BJ (cell line): ENCODE measurements at regions of chr19 and their contacts with region 1.

Region 1: DNA sequence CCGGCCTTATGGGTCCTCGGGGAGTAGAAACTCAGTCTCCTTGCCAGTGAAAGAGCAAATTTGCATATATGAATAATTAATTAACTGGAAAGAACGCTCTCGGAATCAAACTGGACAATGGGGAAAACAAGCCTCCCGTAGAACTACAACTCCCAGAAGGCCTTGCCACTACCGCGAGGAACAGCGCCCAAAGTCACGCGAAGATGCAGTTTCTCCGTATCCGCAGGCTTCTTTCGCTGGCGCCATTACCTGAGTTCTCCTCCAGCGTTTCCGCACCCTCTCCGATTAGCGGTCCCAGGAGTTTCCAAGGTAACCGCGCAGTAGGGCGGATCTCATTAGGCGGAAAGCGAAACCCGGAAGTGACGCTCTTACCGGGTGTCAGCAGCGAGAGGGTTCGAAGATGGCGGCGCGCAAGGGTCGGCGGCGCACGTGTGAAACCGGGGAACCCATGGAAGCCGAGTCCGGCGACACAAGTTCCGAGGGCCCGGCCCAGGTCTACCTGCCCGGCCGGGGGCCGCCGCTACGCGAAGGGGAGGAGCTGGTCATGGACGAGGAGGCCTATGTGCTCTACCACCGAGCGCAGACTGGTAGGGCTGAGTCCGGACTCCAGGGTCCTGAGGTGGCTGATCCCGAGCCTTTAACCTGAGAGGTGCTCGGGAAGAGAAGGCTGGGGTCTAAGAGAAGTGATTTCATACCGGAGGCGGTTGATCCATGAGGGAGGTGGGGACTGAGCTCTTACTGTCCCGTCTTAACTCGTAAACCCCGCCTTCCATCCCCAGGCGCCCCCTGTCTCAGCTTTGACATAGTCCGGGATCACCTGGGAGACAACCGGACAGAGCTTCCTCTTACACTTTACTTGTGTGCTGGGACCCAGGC is at the start of gene GRWD1:
- DNase-seq: peak; percentile 88
- H3K4me3 ChIP-seq: peak within 1 kb of the TSS; percentile 87
- H3K27me3 ChIP-seq: no peaks in the 10 kb centered on the region
- CTCF ChIP-seq: peak; percentile 26
- polyA plus RNA-seq, gene GRWD1: 13.9 and 20.0 TPM in 2 replicates

Region 2: DNA sequence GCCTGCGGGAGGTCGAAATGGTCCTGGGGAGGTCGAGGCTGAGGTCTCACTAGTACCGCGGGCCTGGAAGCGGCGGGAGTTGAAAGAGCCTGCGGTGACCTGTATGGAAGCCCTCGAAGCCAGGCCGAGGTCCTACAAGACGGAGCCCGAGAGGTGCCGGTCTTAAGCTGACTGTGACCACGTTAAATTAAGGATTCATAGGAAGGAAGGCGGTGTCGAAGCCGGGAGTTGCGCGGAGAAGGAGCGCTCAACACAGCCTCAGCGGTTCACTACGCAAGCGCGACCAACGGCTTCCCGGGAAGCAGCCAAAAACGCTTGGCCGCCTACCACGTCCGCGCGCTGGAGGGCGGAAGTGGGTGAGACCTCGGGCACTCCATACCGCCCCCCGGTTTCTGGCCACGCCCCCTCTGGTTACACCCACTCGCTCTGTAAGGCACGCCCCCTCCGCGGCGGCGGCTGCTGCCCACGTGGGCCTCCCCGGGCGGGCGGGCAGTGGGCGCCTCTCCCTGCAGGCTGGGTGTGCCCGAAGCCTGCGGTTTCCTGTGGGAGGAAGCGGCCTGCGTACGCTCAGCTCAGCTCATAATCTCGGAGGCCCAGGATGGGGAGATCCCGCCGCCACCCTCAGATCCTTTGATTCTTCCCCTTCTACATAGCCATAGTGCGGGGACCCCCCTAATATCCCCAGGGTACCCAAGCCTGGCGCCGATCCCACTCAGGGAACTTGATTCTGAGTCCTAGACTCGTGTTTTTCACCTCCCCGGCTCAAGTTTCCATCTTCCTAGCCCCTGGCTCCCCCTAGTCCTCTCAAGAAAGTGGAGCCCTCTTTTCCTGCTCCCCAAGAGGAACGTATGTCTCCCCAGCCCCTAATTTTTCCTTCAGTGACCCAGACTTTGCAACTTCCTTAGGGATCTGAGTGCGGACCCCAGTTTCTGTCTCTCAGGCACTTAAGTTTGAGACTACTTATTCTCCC is 123.9 kb before region 1 on chr19:
- CTCF ChIA-PET with region 1: no interaction called
- POLR2A ChIA-PET with region 1: no interaction called
- DNase-seq: peak; percentile 91
- H3K4me3 ChIP-seq: peak overlapping the region; percentile 59
- H3K27me3 ChIP-seq: no peaks in the 10 kb centered on the region
- CTCF ChIP-seq: no peak

Region 3: GRCh38 chr19:48398375-48399235 is 47.2 kb before region 1 on chr19:
- CTCF ChIA-PET with region 1: no interaction called
- POLR2A ChIA-PET with region 1: no interaction called
- DNase-seq: no peak
- H3K4me3 ChIP-seq: peak overlapping the region; percentile 60
- H3K27me3 ChIP-seq: peaks cover 4% of the 10 kb centered on the region; the same call in 1 of the 2 replicates
- CTCF ChIP-seq: no peak

Region 4: GRCh38 chr19:48468775-48469288 is 23.0 kb after region 1 on chr19:
- CTCF ChIA-PET with region 1: interaction called, 3 read pairs
- POLR2A ChIA-PET with region 1: interaction called, 26 read pairs
- DNase-seq: peak; percentile 100
- H3K4me3 ChIP-seq: peak overlapping the region; percentile 93
- H3K27me3 ChIP-seq: no peaks in the 10 kb centered on the region
- CTCF ChIP-seq: no peak